GM10248 (cell line): ENCODE measurements at regions of chr1 and their contacts with region 1.

Region 1: DNA sequence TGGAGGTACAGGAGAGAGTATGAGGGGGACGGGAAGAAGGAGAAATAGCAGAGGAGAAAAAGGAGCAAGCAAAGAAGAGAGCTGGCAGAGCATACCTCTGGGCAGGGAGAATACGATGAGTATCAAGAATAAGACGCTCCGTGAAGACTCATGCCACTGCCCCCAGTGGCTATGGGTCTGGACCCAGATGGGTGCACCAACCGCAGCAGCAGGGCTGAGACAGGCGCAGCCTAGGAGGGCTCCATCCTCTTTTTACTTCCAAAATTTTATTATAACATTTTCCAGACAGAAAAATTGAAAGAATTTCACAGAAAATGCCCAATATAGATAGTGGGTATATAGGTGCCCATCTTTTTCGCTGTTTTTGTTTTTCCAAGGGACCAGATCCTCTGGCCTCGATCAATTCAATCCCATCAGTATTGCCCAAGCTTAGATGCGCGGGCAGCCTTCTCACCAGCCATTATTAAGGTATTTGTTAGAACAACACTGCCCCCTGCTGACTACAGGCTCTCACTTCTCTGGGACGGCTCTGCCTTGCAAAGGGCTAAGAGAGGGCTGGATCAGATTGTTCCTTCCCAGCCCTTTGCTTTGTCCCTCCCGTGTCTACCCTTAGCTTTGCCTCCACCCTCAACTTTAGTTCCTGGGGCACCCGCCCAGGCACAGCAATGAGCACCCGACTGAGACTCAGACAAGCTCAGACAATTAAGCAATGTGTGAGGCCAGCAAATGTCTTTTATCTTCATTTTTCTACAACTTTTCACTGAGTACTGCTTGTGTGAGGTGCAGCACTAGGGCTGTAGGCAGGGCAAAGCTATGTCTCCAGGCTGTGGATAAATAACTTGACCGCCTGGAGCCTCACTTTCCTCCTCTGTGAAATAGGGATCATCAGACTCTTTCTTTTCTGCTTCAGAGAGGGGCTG is 17.5 kb upstream of the CAMK1G start:
- DNase-seq: peak; percentile 70
- CTCF ChIP-seq: peak; percentile 78

Region 2: GRCh38 chr1:209229494-209230059 is 336.4 kb before region 1 on chr1:
- CTCF ChIA-PET with region 1: no interaction called
- POLR2A ChIA-PET with region 1: no interaction called
- DNase-seq: no peak
- CTCF ChIP-seq: no peak

Region 3: DNA sequence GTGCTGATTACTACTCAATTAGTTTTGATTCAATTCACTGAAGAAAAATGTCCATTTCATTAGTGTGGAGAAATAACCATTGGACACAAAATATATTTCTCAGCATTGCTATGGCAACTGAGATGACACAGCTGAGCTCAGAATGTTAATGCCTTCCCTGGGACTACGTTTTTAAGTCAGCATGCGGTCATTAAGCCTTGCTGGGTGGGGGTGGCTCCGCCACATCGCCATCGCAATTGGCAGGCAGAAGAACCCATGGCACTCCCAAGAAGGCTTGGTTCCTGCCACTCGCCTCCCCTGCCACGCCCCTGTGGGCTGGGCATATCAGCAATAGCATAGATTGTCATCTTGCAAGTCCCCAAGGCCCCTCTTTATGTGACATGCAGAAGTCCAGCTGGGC is 239.2 kb before region 1 on chr1:
- CTCF ChIA-PET with region 1: no interaction called
- POLR2A ChIA-PET with region 1: no interaction called
- DNase-seq: no peak
- CTCF ChIP-seq: no peak

Region 4: DNA sequence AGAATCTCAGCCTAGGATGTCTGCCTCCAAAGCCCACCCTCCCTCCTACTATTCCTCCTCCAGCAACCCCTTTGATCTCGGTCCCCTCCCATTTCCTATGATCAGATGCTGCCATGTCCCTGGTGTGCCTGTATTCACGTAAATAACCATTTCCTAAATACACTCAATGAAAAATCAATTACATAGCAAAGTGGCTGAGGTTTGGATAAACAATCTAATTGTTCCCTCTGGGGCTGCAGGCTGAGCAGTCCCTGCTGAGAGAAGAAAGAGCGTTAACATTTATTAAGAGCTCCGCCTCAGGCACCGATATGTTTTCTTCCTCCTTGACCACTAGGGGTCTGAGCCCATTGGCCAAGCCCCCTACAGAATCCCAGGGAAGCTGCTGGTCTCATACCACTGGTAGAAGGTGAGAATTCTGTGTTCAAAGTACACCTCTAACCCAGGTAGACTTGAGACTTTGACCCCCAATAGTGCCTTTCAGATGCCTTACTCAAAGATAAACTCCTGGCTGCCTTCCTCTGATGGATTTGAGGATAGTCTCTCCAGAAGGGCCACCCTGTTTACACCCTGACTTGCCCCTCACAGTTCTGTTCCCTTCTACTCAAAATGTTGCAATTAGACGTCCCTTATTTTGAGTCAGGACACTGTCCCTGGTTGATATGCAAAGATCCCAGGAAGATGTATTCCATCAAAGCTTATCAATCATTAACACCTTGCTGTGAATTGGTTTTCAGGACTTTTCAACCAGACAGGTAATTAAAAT is 16.4 kb before region 1 on chr1:
- CTCF ChIA-PET with region 1: interaction called, 13 read pairs
- POLR2A ChIA-PET with region 1: no interaction called
- DNase-seq: no peak
- CTCF ChIP-seq: no peak

Region 5: GRCh38 chr1:209576798-209577197 is 10.8 kb after region 1 on chr1:
- CTCF ChIA-PET with region 1: interaction called, 52 read pairs
- POLR2A ChIA-PET with region 1: no interaction called
- DNase-seq: peak; percentile 80
- CTCF ChIP-seq: peak; percentile 91

Region 6: GRCh38 chr1:209585672-209586071 is 19.7 kb after region 1 on chr1:
- CTCF ChIA-PET with region 1: interaction called, 17 read pairs
- POLR2A ChIA-PET with region 1: no interaction called
- DNase-seq: no peak
- CTCF ChIP-seq: no peak

Region 7: GRCh38 chr1:209601809-209602657 is 36.0 kb after region 1 on chr1:
- CTCF ChIA-PET with region 1: interaction called, 15 read pairs
- POLR2A ChIA-PET with region 1: no interaction called
- DNase-seq: no peak
- CTCF ChIP-seq: peak; percentile 50

Region 8: GRCh38 chr1:209627732-209628196 is 61.7 kb after region 1 on chr1:
- CTCF ChIA-PET with region 1: interaction called, 19 read pairs
- POLR2A ChIA-PET with region 1: no interaction called
- DNase-seq: peak; percentile 86
- CTCF ChIP-seq: peak; percentile 99

Region 9: GRCh38 chr1:209643285-209644020 is 77.4 kb after region 1 on chr1:
- CTCF ChIA-PET with region 1: interaction called, 12 read pairs
- POLR2A ChIA-PET with region 1: no interaction called
- DNase-seq: no peak
- CTCF ChIP-seq: no peak